Tibial artery (tissue), 4 donors: ENCODE measurements at regions of chr11 and their contacts with region 1.

Region 1: DNA sequence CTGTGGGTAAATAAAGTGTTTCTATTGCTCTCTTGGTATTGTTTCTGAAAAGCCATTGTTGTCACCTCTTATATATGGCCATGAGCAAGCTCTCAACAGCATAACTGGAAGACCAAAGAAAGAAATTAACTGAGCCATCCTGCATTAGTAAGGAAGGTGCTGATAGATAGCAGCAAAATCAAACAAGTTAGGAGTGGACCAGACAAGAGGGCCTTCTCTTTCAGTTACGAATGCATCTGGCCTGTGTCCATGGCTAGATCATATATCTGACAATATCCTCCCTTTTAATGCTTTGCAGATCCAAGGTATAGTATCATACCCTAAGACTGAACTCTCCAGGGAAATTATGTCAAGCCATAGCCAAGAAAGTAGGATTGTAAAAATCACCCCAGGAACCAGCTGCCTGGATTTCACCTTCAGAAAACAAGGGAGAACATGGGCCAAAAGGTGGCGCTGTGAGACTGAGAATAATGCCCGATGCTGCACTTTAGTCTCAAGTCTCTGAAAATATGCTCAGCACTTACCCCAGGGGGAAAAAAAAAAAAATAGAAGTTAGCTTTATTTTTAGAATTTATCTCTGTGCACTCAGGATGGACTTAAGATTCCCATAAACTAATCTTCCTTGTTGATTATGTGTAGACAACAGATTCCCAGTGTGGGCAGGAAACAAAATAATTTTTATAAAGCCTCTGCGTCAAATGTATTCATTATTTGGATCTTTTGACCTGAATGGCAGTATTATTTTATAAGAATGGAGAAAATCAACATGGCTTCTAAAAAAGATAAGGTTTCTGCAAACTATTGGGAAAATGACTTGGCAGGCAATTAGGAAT is 415.1 kb downstream of the ETS1 start:
- DNase-seq: peak; percentile 86
- H3K4me3 ChIP-seq: no peak overlapping the region
- H3K27ac ChIP-seq: no peak overlapping the region
- H3K4me1 ChIP-seq: peaks cover 0 to 4% (median 0%) of the 10 kb centered on the region in 4 donors
- H3K27me3 ChIP-seq: no peaks in the 10 kb centered on the region
- CTCF ChIP-seq: peak; percentile 63 to 81

Region 2: GRCh38 chr11:128201801-128202200 is 29.5 kb after region 1 on chr11:
- intact Hi-C with region 1: loop called (anchors 2 kb)
- DNase-seq: no peak
- H3K4me3 ChIP-seq: no peak overlapping the region
- H3K27ac ChIP-seq: no peak overlapping the region
- H3K4me1 ChIP-seq: no peaks in the 10 kb centered on the region
- H3K27me3 ChIP-seq: no peaks in the 10 kb centered on the region
- CTCF ChIP-seq: no peak

Region 3: DNA sequence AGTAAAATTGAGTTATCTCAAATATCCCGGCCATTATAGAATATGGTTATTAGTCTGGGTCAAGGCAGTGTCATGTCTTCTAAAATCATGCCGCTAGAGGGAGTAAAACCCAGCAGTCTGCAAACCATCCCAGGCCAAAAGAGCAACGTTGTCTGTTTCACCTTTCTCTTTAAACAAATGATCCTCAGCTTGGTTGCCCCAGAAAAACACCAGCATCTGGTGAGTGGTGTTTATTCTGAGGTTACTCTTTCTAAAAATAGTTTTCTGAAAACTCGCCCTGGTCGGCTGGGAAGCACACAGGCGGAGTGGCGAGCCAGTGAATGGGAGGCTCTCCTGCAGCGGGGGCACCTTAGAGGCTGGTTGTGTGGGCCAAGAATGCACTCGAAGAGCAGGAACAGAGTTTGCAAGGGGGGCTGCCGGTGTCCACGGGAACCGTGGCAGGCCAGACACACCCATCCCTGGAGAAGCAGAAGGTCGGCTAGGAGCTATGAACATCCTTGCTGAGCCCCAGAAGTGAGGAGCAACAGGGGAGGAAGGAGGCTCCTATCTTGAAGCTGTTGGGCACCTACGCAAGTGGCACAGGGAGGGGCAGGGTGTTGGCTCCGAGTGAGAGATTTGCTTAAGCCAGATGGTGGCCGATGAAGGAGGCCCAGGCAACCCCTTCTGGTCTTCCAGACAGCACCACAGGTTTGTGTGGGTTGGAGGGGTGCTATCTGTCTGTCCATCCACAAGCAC is 118.0 kb after region 1 on chr11:
- intact Hi-C with region 1: loop called (anchors 10 kb)
- DNase-seq: peak; percentile 47 to 67
- H3K4me3 ChIP-seq: no peak overlapping the region
- H3K27ac ChIP-seq: peak overlapping the region; percentile 14 to 15
- H3K4me1 ChIP-seq: peaks cover 0 to 34% (median 17%) of the 10 kb centered on the region in 4 donors
- H3K27me3 ChIP-seq: no peaks in the 10 kb centered on the region
- CTCF ChIP-seq: peak; percentile 84 to 85

Region 4: DNA sequence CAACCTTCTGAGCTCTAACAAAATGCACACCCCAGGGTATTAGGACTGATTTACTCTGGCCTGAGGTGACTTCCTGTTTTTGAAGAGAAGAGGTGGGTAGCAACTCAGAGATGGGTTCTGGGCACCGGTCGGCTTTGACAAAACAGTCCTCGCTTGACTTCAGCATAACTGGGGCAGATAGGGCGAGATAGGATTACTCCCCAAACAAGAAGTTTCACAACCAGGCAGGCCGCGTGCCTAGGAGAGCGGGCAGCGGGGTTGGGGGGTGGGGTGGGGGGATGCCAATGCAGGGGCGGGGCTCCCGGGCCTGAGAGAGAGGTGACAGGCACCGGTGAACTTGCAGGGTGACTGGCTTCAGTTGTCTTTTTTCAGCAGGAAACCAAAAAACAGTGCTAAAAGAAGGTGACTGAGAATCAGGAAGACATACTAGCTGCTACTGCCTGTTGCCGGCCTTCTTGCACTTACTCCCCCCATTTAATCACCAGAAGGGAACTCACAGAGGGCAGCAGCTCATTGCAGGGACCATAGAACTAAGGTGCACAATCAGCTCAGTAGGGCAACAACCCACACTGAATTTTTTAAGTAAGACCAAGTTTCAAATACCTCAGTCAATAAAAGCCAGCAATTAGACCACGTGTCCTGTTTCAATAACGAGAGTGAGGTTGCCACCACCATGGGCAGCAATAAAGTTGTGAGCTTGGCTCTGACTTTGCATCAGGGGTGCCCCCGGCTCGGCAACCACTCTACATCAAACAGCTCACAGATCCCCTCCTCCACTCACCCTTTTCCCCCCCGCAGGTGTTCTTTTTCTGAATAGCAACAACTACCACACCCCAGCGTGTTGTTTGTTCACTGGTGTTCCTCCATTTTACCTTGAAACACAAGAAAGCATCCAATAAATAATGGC is 452.3 kb after region 1 on chr11:
- intact Hi-C with region 1: loop called (anchors 2 kb)
- DNase-seq: no peak
- H3K4me3 ChIP-seq: no peak overlapping the region
- H3K27ac ChIP-seq: no peak overlapping the region
- H3K4me1 ChIP-seq: peaks cover 0 to under 1% (median 0%) of the 10 kb centered on the region in 4 donors
- H3K27me3 ChIP-seq: no peaks in the 10 kb centered on the region
- CTCF ChIP-seq: no peak

Region 5: GRCh38 chr11:128831174-128832120 is 659.2 kb after region 1 on chr11:
- intact Hi-C with region 1: loop called (anchors 2 kb)
- DNase-seq: peak; percentile 78 to 86
- H3K4me3 ChIP-seq: no peak overlapping the region
- H3K27ac ChIP-seq: no peak overlapping the region
- H3K4me1 ChIP-seq: peaks cover 0 to 4% (median 2%) of the 10 kb centered on the region in 4 donors
- H3K27me3 ChIP-seq: peaks cover 0 to 18% of the 10 kb centered on the region in 2 donors
- CTCF ChIP-seq: peak; percentile 75 to 88